Mammary epithelial cell (primary cell): ENCODE measurements at regions of chr10 and their contacts with region 1.

Region 1: DNA sequence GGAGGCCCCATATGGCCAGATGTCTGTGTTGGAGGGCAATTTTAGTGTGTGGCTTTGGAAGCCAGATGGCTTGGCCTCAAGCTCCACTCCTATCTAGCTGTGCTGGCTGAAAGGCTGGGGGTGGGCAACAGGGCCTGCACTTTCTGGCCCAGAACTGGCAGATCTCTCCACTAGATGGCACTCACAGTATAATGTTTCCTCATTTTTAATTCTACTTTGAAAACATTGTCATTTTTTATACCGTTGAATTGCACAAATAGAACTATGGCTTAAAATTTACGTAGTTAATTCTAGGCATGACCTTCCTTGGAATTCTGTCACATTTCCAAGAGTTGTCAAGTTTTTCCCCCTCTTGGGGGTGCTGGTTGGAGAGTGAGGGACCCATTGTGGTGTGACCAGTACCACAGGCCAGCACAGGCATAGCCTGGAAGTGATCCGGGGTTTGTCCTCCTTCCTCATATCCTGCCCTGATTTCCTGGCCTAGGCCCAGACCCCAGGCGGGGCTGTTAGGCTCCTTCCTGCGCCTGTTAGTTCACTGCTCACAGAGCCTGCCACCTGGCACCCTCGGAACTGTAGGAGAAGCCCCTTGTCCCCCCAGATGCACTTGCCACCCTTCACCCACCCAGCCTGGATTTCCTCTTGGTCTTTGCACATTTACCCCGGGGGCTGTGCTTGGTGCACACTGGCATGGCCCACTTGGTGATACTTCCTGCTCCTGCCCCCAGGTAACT is 52.8 kb downstream of the ARHGAP22 start:
- DNase-seq: peak; percentile 11
- H3K4me3 ChIP-seq: no peak overlapping the region
- H3K27ac ChIP-seq: no peak overlapping the region
- H3K4me1 ChIP-seq: no peaks in the 10 kb centered on the region
- H3K27me3 ChIP-seq: no peaks in the 10 kb centered on the region
- CTCF ChIP-seq: peak; percentile 70 to 72

Region 2: GRCh38 chr10:48363617-48364355 is 188.2 kb before region 1 on chr10:
- CTCF ChIA-PET with region 1: no interaction called
- dilution Hi-C with region 1: no loop called
- in situ Hi-C with region 1: no loop called
- intact Hi-C with region 1: loop called (anchors 1 kb)
- DNase-seq: peak; percentile 60
- H3K4me3 ChIP-seq: no peak overlapping the region
- H3K27ac ChIP-seq: peak overlapping the region; percentile 36
- H3K4me1 ChIP-seq: peaks cover 21% of the 10 kb centered on the region
- H3K27me3 ChIP-seq: no peaks in the 10 kb centered on the region
- CTCF ChIP-seq: peak; percentile 64 to 77

Region 3: GRCh38 chr10:48444266-48444665 is 107.8 kb before region 1 on chr10:
- CTCF ChIA-PET with region 1: interaction called, 3 read pairs
- dilution Hi-C with region 1: no loop called
- in situ Hi-C with region 1: no loop called
- intact Hi-C with region 1: loop called (anchors 10 kb)
- DNase-seq: peak; percentile 33
- H3K4me3 ChIP-seq: no peak overlapping the region
- H3K27ac ChIP-seq: no peak overlapping the region
- H3K4me1 ChIP-seq: peaks cover under 1% of the 10 kb centered on the region
- H3K27me3 ChIP-seq: no peaks in the 10 kb centered on the region
- CTCF ChIP-seq: peak in 1 of 2 donors; percentile 64

Region 4: GRCh38 chr10:48608279-48608681 is 56.3 kb after region 1 on chr10:
- CTCF ChIA-PET with region 1: no interaction called
- dilution Hi-C with region 1: no loop called
- in situ Hi-C with region 1: no loop called
- intact Hi-C with region 1: loop called (anchors 1 kb)
- DNase-seq: peak; percentile 48
- H3K4me3 ChIP-seq: no peak overlapping the region
- H3K27ac ChIP-seq: no peak overlapping the region
- H3K4me1 ChIP-seq: peaks cover 59% of the 10 kb centered on the region
- H3K27me3 ChIP-seq: no peaks in the 10 kb centered on the region
- CTCF ChIP-seq: peak; percentile 90 to 94

Region 5: GRCh38 chr10:48981310-48981907 is 429.4 kb after region 1 on chr10:
- CTCF ChIA-PET with region 1: no interaction called
- dilution Hi-C with region 1: no loop called
- in situ Hi-C with region 1: no loop called
- intact Hi-C with region 1: loop called (anchors 10 kb)
- DNase-seq: peak; percentile 7
- H3K4me3 ChIP-seq: no peak overlapping the region
- H3K27ac ChIP-seq: no peak overlapping the region
- H3K4me1 ChIP-seq: no peaks in the 10 kb centered on the region
- H3K27me3 ChIP-seq: no peaks in the 10 kb centered on the region
- CTCF ChIP-seq: peak; percentile 63 to 89

Region 6: GRCh38 chr10:49419005-49419404 is 867.0 kb after region 1 on chr10:
- CTCF ChIA-PET with region 1: no interaction called
- dilution Hi-C with region 1: no loop called
- in situ Hi-C with region 1: no loop called
- intact Hi-C with region 1: loop called (anchors 10 kb)
- DNase-seq: peak; percentile 86
- H3K4me3 ChIP-seq: no peak overlapping the region
- H3K27ac ChIP-seq: peak overlapping the region; percentile 39
- H3K4me1 ChIP-seq: peaks cover 16% of the 10 kb centered on the region
- H3K27me3 ChIP-seq: no peaks in the 10 kb centered on the region
- CTCF ChIP-seq: peak in 1 of 2 donors; percentile 32

Region 7: GRCh38 chr10:49518982-49519578 is 967.1 kb after region 1 on chr10:
- CTCF ChIA-PET with region 1: no interaction called
- dilution Hi-C with region 1: no loop called
- in situ Hi-C with region 1: no loop called
- intact Hi-C with region 1: loop called (anchors 10 kb)
- DNase-seq: peak; percentile 26
- H3K4me3 ChIP-seq: no peak overlapping the region
- H3K27ac ChIP-seq: no peak overlapping the region
- H3K4me1 ChIP-seq: no peaks in the 10 kb centered on the region
- H3K27me3 ChIP-seq: no peaks in the 10 kb centered on the region
- CTCF ChIP-seq: peak; percentile 63 to 68